ENCODE measurements at regions of chr1 and their contacts with region 1.

Region 1: DNA sequence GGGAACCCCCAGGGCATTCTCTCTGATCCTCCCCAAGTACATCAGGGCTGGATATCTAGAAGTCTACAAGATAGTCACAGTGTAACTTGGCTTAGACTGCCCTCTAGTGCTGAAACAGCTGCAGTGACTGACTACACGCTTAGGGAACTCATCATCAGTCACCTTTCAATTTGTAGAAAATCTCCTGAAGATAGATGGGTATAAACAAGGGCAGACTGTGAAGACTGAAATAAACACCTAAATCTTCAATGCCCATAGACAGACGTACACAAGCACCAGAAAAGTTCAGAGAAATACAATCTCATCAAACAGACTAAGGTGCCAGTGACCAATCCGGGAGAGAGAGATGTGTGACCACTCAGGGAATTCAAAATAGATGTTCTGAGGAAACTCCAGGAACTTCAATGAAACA is 46.6 kb downstream of the PACC1 start:
- DNase-seq: no peak
- ATAC-seq: peak; percentile 97
- H3K4me3 ChIP-seq: no peak overlapping the region
- H3K27ac ChIP-seq: no peak overlapping the region
- H3K4me1 ChIP-seq: no peaks in the 10 kb centered on the region
- H3K27me3 ChIP-seq: no peaks in the 10 kb centered on the region
- CTCF ChIP-seq: peak; percentile 84

Region 2: DNA sequence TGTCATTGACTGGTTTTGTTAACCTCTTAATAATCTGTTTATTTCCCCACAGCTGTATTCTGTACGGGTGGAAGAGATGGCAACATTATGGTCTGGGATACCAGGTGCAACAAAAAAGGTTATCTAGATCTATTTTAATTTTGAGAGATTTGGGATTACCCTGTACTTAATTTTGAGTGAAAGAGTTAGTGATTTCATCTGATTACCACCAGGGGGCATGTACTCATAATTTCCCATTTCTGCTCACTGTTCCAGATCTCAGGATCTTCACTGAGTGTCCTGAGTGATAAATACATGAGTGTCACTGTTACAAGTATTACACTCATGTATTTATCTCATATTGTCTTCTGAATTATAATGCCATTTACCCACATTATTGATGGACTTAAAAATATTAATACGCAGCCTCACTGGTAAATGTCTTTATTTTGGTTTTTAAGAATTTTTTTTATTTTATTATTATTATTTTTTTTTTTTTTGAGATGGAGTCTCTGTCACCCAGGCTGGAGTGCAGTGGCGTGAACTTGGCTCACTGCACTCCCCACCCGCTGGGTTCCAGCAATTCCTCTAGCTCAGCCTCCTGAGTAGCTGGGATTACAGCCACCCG is 305.1 kb before region 1 on chr1:
- intact Hi-C with region 1: loop called (anchors 5 kb)
- DNase-seq: no peak
- ATAC-seq: peak; percentile 81
- H3K4me3 ChIP-seq: no peak overlapping the region
- H3K27ac ChIP-seq: no peak overlapping the region
- H3K4me1 ChIP-seq: no peaks in the 10 kb centered on the region
- H3K27me3 ChIP-seq: no peaks in the 10 kb centered on the region
- CTCF ChIP-seq: peak; percentile 79